ENCODE measurements at regions of chr13 and their contacts with region 1.

Region 1: DNA sequence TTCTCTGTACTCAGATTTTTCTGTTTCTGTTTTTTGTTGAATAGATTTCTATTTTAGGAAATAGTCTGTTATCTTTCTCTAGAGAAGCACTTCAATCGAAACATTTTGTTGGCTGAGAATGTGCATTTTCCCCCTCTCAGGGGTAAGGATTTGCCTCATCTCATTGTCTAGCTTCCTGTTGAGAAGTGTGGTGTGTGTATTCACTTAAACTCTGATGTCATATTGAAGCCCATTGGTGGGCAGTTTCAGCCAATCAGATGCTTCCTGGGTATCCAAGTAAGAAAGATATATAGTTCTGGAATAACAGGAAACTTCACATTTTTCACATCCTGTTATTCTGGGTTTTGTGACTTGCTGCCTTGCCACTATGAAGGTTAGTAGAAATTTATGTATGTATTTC is 87.6 kb downstream of the ARHGEF7 start:
- DNase-seq: peak; percentile 59
- ATAC-seq: peak; percentile 50
- H3K4me3 ChIP-seq: no peak overlapping the region
- H3K4me3 Mint-ChIP-seq: peak overlapping the region; percentile 76
- H3K27ac ChIP-seq: peak overlapping the region; percentile 43 to 76
- H3K27ac Mint-ChIP-seq: peak overlapping the region; percentile 62
- H3K4me1 ChIP-seq: peaks cover 62 to 77% of the 10 kb centered on the region in 2 donors
- H3K4me1 Mint-ChIP-seq: peaks cover 81% of the 10 kb centered on the region
- H3K27me3 ChIP-seq: no peaks in the 10 kb centered on the region
- H3K27me3 Mint-ChIP-seq: no peaks in the 10 kb centered on the region
- CTCF ChIP-seq: no peak

Region 2: GRCh38 chr13:111225810-111226546 is 23.2 kb after region 1 on chr13:
- CTCF ChIA-PET with region 1: interaction called, 11 read pairs
- POLR2A ChIA-PET with region 1: no interaction called
- intact Hi-C with region 1: no loop called
- DNase-seq: no peak
- ATAC-seq: no peak
- H3K4me3 ChIP-seq: no peak overlapping the region
- H3K4me3 Mint-ChIP-seq: no peak overlapping the region
- H3K27ac ChIP-seq: no peak overlapping the region
- H3K27ac Mint-ChIP-seq: no peak overlapping the region
- H3K4me1 ChIP-seq: no peaks in the 10 kb centered on the region
- H3K4me1 Mint-ChIP-seq: peaks cover 14% of the 10 kb centered on the region
- H3K27me3 ChIP-seq: no peaks in the 10 kb centered on the region
- H3K27me3 Mint-ChIP-seq: no peaks in the 10 kb centered on the region
- CTCF ChIP-seq: no peak

Measured in B cell (primary cell).